ENCODE measurements at regions of chr14 and their contacts with region 1.

Region 1: DNA sequence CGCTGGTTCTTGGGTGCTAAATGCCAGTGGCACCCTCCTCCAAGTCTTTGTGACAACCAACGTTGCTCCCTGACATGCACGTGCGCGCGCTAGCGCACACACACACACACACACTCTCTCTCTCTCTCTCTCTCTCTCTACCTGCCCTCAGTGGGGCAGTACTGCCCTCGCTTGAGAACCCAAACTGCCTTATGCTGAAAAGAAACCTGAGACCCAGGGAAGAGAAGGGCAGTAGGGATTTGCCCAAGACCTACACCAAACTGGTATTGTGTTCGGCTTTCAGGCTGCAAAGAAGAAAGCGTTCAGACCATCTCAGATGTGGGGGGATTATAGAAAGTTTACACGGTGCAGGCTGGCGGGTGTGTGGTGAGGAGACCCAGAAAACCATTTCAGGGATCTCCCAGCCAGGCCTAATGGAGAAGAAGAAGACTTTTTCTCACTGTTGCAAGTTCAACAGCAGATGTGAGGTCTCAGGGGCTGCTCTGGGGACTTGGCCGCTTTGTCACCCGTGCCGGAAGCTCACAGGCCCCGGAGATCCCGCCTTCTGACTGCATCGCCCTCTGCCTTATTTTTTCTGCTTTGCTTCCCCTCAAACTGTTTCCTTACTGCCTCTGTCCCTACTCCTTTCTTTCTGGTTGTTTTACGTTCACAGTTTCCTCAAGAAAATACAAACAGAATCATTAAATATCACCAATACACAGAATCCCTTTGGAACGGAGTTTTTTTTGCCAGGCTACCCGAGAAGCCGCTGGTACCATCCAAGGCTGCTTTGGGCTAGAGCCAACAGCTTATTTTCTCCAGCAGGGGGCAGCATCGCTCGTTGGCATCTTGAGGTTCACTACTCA is 82.4 kb downstream of the PPM1A start:
- DNase-seq: peak; percentile 55 to 86 (median 72)
- ATAC-seq: peak; percentile 78
- H3K4me3 ChIP-seq: peak overlapping the region; percentile 54
- H3K4me3 Mint-ChIP-seq: peak overlapping the region; percentile 96
- H3K27ac ChIP-seq: peak overlapping the region in 1 of 2 donors; percentile 29
- H3K27ac Mint-ChIP-seq: peak overlapping the region; percentile 85
- H3K4me1 ChIP-seq: peaks cover 13% of the 10 kb centered on the region
- H3K4me1 Mint-ChIP-seq: peaks cover 32% of the 10 kb centered on the region
- H3K27me3 ChIP-seq: peaks cover 3 to 6% of the 10 kb centered on the region in 2 experiments
- H3K27me3 Mint-ChIP-seq: peaks cover 56% of the 10 kb centered on the region
- CTCF ChIP-seq: peak; percentile 88

Region 2: GRCh38 chr14:59189786-59190771 is 1141.3 kb before region 1 on chr14:
- CTCF ChIA-PET with region 1: no interaction called
- POLR2A ChIA-PET with region 1: no interaction called
- intact Hi-C with region 1: loop called in 1 of 2 experiments (anchors 10 kb)
- DNase-seq: peak; percentile 28 to 91 (median 56)
- ATAC-seq: no peak
- H3K4me3 ChIP-seq: peak overlapping the region; percentile 83
- H3K4me3 Mint-ChIP-seq: peak overlapping the region; percentile 99
- H3K27ac ChIP-seq: peak overlapping the region; percentile 84 to 87
- H3K27ac Mint-ChIP-seq: peak overlapping the region; percentile 94
- H3K4me1 ChIP-seq: peaks cover 20% of the 10 kb centered on the region
- H3K4me1 Mint-ChIP-seq: peaks cover 29% of the 10 kb centered on the region
- H3K27me3 ChIP-seq: no peaks in the 10 kb centered on the region
- H3K27me3 Mint-ChIP-seq: no peaks in the 10 kb centered on the region
- CTCF ChIP-seq: no peak

Region 3: GRCh38 chr14:60064491-60065072 is 266.8 kb before region 1 on chr14:
- CTCF ChIA-PET with region 1: no interaction called
- POLR2A ChIA-PET with region 1: no interaction called
- intact Hi-C with region 1: loop called in 1 of 2 experiments (anchors 10 kb)
- DNase-seq: peak in 3 of 14 experiments; percentile 60 to 65 (median 60)
- ATAC-seq: peak; percentile 41
- H3K4me3 ChIP-seq: no peak overlapping the region
- H3K4me3 Mint-ChIP-seq: no peak overlapping the region
- H3K27ac ChIP-seq: no peak overlapping the region
- H3K27ac Mint-ChIP-seq: no peak overlapping the region
- H3K4me1 ChIP-seq: no peaks in the 10 kb centered on the region
- H3K4me1 Mint-ChIP-seq: no peaks in the 10 kb centered on the region
- H3K27me3 ChIP-seq: peaks cover 0 to 3% of the 10 kb centered on the region in 2 experiments
- H3K27me3 Mint-ChIP-seq: peaks cover 18% of the 10 kb centered on the region
- CTCF ChIP-seq: peak; percentile 65

Region 4: DNA sequence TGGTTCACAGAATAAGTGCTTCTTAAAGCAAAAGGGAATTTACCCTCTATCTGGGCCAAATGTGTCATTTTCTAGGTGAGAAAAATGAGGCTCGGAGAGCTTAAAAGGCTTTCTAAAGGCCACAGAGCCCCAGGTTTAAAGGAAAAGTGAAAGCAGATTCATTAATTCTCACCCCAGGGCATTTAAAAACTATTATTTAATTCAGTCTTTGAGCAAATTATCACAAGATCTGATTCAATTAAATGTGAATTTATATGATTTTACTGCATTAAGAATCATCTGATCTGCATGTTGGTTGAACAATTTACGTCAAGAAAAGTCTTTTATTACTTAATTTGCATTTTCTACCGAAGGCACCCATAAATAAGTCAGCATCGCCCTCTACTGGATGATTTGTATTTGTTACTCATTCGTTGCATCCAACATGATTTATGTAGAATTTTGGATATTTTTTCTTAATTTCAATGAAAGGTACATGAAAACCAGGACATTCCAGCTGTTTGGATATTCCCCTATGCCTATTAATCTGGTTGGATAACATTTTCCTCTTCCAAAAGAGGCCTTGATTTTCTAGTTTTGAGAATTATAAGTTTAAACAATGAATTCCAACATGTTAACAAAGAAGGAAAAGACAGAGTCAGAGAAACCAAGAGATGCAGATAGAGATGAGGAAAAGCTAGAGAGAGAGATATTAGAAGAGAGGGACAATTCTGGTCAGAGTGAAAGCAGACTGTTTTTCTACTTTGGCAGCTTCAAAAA is 147.1 kb before region 1 on chr14:
- CTCF ChIA-PET with region 1: no interaction called
- POLR2A ChIA-PET with region 1: no interaction called
- intact Hi-C with region 1: loop called in 1 of 2 experiments (anchors 5 kb)
- DNase-seq: peak in 6 of 14 experiments; percentile 9 to 87 (median 62)
- ATAC-seq: peak; percentile 71
- H3K4me3 ChIP-seq: peak overlapping the region; percentile 52
- H3K4me3 Mint-ChIP-seq: peak overlapping the region; percentile 75
- H3K27ac ChIP-seq: peak overlapping the region in 1 of 2 donors; percentile 74
- H3K27ac Mint-ChIP-seq: peak overlapping the region; percentile 74
- H3K4me1 ChIP-seq: peaks cover 4% of the 10 kb centered on the region
- H3K4me1 Mint-ChIP-seq: peaks cover 11% of the 10 kb centered on the region
- H3K27me3 ChIP-seq: no peaks in the 10 kb centered on the region
- H3K27me3 Mint-ChIP-seq: no peaks in the 10 kb centered on the region
- CTCF ChIP-seq: peak; percentile 89

Region 5: GRCh38 chr14:60266021-60266937 is 65.1 kb before region 1 on chr14:
- CTCF ChIA-PET with region 1: interaction called, 7 read pairs
- POLR2A ChIA-PET with region 1: interaction called, 6 read pairs
- intact Hi-C with region 1: loop called in 1 of 2 experiments (anchors 5 kb)
- DNase-seq: peak in 8 of 14 experiments; percentile 1 to 55 (median 20)
- ATAC-seq: peak; percentile 58
- H3K4me3 ChIP-seq: no peak overlapping the region
- H3K4me3 Mint-ChIP-seq: no peak overlapping the region
- H3K27ac ChIP-seq: no peak overlapping the region
- H3K27ac Mint-ChIP-seq: no peak overlapping the region
- H3K4me1 ChIP-seq: peaks cover 2% of the 10 kb centered on the region
- H3K4me1 Mint-ChIP-seq: peaks cover 50% of the 10 kb centered on the region
- H3K27me3 ChIP-seq: no peaks in the 10 kb centered on the region
- H3K27me3 Mint-ChIP-seq: no peaks in the 10 kb centered on the region
- CTCF ChIP-seq: peak; percentile 73

Region 6: DNA sequence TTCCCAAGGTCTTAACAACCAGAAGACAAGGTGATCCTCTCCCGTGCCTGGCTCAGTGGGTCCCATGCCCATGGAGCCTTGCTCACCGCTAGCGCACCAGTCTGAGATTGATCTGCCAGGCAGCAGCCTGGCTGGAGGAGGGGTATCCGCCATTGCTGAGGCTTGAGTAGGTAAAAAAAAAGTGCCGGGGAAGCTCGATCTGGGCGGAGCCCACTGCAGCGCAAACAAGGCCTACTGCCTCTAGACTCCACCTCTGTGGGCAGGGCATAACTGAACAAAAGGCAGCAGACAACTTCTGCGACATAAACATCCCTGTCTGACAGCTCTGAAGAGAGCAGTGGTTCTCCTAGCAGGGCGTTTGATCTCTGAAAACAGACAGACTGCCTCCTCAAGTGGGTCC is 50.5 kb after region 1 on chr14:
- CTCF ChIA-PET with region 1: no interaction called
- POLR2A ChIA-PET with region 1: no interaction called
- intact Hi-C with region 1: no loop called
- DNase-seq: no peak
- ATAC-seq: no peak
- H3K4me3 ChIP-seq: no peak overlapping the region
- H3K4me3 Mint-ChIP-seq: no peak overlapping the region
- H3K27ac ChIP-seq: no peak overlapping the region
- H3K27ac Mint-ChIP-seq: no peak overlapping the region
- H3K4me1 ChIP-seq: no peaks in the 10 kb centered on the region
- H3K4me1 Mint-ChIP-seq: no peaks in the 10 kb centered on the region
- H3K27me3 ChIP-seq: peaks cover 6 to 7% of the 10 kb centered on the region in 2 experiments
- H3K27me3 Mint-ChIP-seq: peaks cover 41% of the 10 kb centered on the region
- CTCF ChIP-seq: no peak

Region 7: DNA sequence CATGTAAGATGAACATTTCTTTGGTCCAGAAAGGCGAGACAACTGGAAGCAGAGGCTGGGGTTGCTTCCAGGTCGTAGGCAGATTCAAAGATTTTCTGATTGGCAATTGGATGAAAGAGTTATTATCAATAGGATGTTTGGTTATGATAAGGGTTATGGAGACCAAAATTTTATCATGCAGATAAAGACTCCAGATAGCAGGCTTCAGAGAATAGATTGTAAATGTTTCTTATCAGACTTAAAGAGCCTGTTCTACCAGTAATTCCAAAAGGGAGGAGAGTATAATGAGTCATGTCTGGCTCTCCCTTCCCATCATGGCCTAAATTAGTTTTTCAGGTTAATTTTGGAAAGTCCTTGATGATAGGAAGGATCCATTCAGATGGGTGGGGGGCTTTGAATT is 98.9 kb after region 1 on chr14:
- CTCF ChIA-PET with region 1: no interaction called
- POLR2A ChIA-PET with region 1: no interaction called
- intact Hi-C with region 1: no loop called
- DNase-seq: no peak
- ATAC-seq: no peak
- H3K4me3 ChIP-seq: no peak overlapping the region
- H3K4me3 Mint-ChIP-seq: no peak overlapping the region
- H3K27ac ChIP-seq: no peak overlapping the region
- H3K27ac Mint-ChIP-seq: no peak overlapping the region
- H3K4me1 ChIP-seq: no peaks in the 10 kb centered on the region
- H3K4me1 Mint-ChIP-seq: no peaks in the 10 kb centered on the region
- H3K27me3 ChIP-seq: no peaks in the 10 kb centered on the region
- H3K27me3 Mint-ChIP-seq: peaks cover 17% of the 10 kb centered on the region
- CTCF ChIP-seq: no peak

Region 8: DNA sequence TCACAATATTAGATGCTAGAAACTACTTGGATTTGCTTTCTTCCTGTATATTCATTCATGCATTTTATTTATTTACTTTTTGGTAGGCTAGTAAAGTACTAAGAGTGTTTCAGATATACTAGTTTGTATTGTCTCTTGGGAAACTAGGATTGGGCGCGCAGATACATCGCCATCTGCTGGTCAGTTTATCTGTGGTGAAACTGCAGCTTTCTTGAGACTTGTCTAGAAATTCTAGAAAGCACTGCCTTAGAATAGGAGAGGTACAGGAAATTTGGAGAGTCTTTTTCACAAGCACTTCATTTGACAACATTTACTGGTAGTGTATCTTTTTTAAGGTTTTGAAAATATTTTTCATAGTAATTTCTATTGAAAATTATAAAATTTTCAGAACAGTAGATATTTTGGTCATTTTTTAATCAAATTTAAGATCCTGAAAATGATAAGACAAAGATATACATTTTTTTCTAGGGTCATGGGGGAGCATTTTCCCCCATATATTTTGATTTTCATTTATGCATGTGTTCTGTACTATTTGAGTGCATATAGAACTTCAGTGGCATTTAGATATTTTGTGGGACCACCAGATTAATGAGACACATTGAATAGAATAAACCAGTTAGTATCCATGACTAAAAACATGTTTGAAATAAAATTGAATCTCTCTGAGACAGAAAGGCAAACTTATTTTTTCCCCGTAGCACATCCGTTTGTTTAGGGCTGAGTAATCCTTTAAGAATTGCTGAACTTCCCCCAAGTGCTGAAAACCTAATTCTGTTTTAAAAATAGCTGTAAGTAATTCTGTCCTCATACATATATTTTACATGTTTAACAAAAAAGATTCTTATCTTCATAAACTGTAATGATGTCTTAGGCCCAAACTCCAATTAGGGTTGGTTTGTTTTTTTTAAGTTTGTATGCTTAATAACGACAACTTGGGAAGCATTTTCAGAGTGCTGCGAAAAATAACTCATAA is 694.1 kb after region 1 on chr14:
- CTCF ChIA-PET with region 1: interaction called, 3 read pairs
- POLR2A ChIA-PET with region 1: no interaction called
- intact Hi-C with region 1: loop called in 1 of 2 experiments (anchors 1 kb)
- DNase-seq: peak in 13 of 14 experiments; percentile 13 to 74 (median 25)
- ATAC-seq: peak; percentile 41
- H3K4me3 ChIP-seq: no peak overlapping the region
- H3K4me3 Mint-ChIP-seq: no peak overlapping the region
- H3K27ac ChIP-seq: no peak overlapping the region
- H3K27ac Mint-ChIP-seq: no peak overlapping the region
- H3K4me1 ChIP-seq: no peaks in the 10 kb centered on the region
- H3K4me1 Mint-ChIP-seq: no peaks in the 10 kb centered on the region
- H3K27me3 ChIP-seq: no peaks in the 10 kb centered on the region
- H3K27me3 Mint-ChIP-seq: no peaks in the 10 kb centered on the region
- CTCF ChIP-seq: peak; percentile 98

Region 9: GRCh38 chr14:61694830-61695694 is 1363.6 kb after region 1 on chr14 and contains the start of gene HIF1A:
- CTCF ChIA-PET with region 1: no interaction called
- POLR2A ChIA-PET with region 1: no interaction called
- intact Hi-C with region 1: loop called in 1 of 2 experiments (anchors 10 kb)
- DNase-seq: peak; percentile 87 to 100 (median 95)
- ATAC-seq: peak; percentile 95
- H3K4me3 ChIP-seq: peak within 1 kb of the TSS; percentile 90
- H3K4me3 Mint-ChIP-seq: peak within 1 kb of the TSS; percentile 98
- H3K27ac ChIP-seq: peak within 1 kb of the TSS; percentile 89 to 91
- H3K27ac Mint-ChIP-seq: peak within 1 kb of the TSS; percentile 97
- H3K4me1 ChIP-seq: peaks cover 17% of the 10 kb centered on the region
- H3K4me1 Mint-ChIP-seq: peaks cover 72% of the 10 kb centered on the region
- H3K27me3 ChIP-seq: no peaks in the 10 kb centered on the region
- H3K27me3 Mint-ChIP-seq: no peaks in the 10 kb centered on the region
- CTCF ChIP-seq: no peak
- total RNA-seq, gene HIF1A: 350 to 369 TPM

Measured in CD4-positive, alpha-beta T cell (primary cell).